Dorsolateral prefrontal cortex (tissue), 120 donors: ENCODE measurements at regions of chr17 and their contacts with region 1.

Region 1: DNA sequence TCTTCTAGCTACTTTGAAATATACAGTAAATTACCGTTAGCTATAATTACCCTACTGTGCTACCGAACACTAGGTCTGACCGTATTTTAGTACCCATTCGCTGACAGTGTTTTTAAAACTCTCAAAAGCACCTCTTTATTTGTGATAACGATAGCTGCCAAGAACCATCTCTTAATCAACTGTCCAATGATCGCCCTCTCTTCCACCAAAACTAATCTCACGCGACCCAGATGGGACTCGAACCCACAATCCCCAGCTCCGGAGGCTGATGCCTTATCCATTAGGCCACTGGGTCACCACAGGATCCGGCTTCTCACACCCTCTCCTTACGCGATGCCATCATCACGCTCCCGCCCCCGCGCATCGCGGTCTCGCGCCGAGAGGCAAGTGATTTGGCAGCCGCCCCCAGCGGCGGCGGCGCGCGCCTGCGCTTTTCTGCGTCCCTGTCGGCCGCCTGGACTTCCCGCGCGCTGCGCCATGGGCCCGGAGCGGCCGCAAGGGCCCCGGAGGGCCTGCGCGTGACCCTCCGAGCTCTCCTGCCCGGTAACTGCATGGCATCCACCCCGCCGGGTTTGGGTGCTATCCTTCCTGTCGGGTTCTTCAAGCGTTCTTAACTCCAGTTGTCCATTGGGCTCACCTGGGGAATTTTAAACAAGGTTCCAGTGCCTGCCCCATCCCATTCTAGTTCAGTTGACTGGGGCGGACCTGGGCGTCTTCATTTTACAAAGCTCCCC is 15.7 kb upstream of the KPNA2 start:
- DNase-seq: peak; percentile 93 to 98 (median 96)
- H3K4me3 ChIP-seq: peak overlapping the region; percentile 42 to 98 (median 78)
- H3K27ac ChIP-seq: peak overlapping the region; percentile 59 to 98 (median 93)
- H3K27me3 ChIP-seq: no peaks in the 10 kb centered on the region
- CTCF ChIP-seq: peak in 53 of 56 donors; percentile 1 to 73 (median 50)

Region 2: GRCh38 chr17:68035523-68036303 is 15.9 kb after region 1 on chr17 and contains the start of gene KPNA2:
- intact Hi-C with region 1: loop called in 1 of 2 experiments (anchors 2 kb)
- DNase-seq: peak; percentile 76 to 94 (median 90)
- H3K4me3 ChIP-seq: peak within 1 kb of the TSS; percentile 50 to 100 (median 96)
- H3K27ac ChIP-seq: peak within 1 kb of the TSS; percentile 29 to 93 (median 80)
- H3K27me3 ChIP-seq: no peaks in the 10 kb centered on the region
- CTCF ChIP-seq: peak in 21 of 56 donors; percentile 1 to 44 (median 16)
- total RNA-seq, gene KPNA2: 17.2 to 55.8 (median 35.5) TPM

Region 3: DNA sequence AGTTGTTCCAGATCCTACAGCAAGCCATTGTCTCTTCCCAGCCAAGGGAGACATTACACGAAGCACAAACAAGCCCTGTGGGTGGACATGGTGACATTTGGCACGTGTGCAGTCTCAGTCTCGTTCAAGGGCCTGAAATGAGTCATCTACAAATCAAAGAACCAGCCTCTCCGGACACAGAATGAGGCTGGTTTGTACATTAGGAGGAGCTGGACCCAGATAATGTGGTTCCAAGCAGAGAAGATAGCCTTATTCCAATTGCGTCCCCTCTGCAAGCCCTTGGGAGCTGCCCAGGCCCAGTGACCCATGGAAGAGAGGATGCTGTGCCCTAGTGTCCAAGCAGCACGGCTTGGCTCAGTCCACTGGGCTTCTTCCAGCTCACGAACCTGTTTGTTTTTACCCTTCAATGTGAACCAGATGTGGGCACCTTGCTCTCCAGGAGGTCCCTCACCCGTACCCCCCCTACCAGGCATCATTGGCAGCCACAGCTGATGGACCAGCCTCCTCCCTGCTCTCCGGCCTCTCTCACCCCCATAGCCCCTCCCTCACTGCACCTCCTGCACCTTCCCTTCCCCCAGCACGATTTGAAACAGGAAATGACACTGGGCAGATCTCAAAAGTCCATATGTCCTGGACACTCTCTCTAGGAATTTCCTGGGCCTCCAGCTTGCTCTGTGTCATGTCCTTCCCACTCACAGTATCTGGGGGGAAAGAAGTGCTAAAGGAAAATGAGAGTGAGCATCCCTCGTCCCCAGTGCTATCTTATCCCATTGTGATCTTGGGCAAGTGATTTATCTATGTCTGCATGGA is 41.9 kb after region 1 on chr17:
- intact Hi-C with region 1: no loop called
- DNase-seq: no peak
- H3K4me3 ChIP-seq: no peak overlapping the region
- H3K27ac ChIP-seq: no peak overlapping the region
- H3K27me3 ChIP-seq: no peaks in the 10 kb centered on the region
- CTCF ChIP-seq: no peak

Region 4: GRCh38 chr17:68101075-68101992 is 81.5 kb after region 1 on chr17:
- intact Hi-C with region 1: loop called in 1 of 2 experiments (anchors 1 kb)
- DNase-seq: peak; percentile 64 to 95 (median 86)
- H3K4me3 ChIP-seq: peak overlapping the region; percentile 59 to 92 (median 81)
- H3K27ac ChIP-seq: peak overlapping the region; percentile 41 to 96 (median 81)
- H3K27me3 ChIP-seq: no peaks in the 10 kb centered on the region
- CTCF ChIP-seq: peak in 14 of 56 donors; percentile 9 to 50 (median 16)